Tibial artery (tissue), 4 donors: ENCODE measurements at regions of chr4 and their contacts with region 1.

Region 1: GRCh38 chr4:2462218-2462991 is 6.5 kb upstream of the RNF4 start:
- DNase-seq: peak; percentile 42 to 75
- H3K4me3 ChIP-seq: peak overlapping the region; percentile 53 to 62
- H3K27ac ChIP-seq: peak overlapping the region in 1 of 2 donors; percentile 47
- H3K4me1 ChIP-seq: peaks cover 0 to 19% (median 13%) of the 10 kb centered on the region in 4 donors
- H3K27me3 ChIP-seq: peaks cover 0 to 21% of the 10 kb centered on the region in 2 donors
- CTCF ChIP-seq: peak; percentile 58 to 62

Region 2: GRCh38 chr4:2217726-2218125 is 244.7 kb before region 1 on chr4:
- intact Hi-C with region 1: loop called (anchors 5 kb)
- DNase-seq: no peak
- H3K4me3 ChIP-seq: no peak overlapping the region
- H3K27ac ChIP-seq: no peak overlapping the region
- H3K4me1 ChIP-seq: peaks cover 0 to 4% (median 0%) of the 10 kb centered on the region in 4 donors
- H3K27me3 ChIP-seq: no peaks in the 10 kb centered on the region
- CTCF ChIP-seq: no peak

Region 3: DNA sequence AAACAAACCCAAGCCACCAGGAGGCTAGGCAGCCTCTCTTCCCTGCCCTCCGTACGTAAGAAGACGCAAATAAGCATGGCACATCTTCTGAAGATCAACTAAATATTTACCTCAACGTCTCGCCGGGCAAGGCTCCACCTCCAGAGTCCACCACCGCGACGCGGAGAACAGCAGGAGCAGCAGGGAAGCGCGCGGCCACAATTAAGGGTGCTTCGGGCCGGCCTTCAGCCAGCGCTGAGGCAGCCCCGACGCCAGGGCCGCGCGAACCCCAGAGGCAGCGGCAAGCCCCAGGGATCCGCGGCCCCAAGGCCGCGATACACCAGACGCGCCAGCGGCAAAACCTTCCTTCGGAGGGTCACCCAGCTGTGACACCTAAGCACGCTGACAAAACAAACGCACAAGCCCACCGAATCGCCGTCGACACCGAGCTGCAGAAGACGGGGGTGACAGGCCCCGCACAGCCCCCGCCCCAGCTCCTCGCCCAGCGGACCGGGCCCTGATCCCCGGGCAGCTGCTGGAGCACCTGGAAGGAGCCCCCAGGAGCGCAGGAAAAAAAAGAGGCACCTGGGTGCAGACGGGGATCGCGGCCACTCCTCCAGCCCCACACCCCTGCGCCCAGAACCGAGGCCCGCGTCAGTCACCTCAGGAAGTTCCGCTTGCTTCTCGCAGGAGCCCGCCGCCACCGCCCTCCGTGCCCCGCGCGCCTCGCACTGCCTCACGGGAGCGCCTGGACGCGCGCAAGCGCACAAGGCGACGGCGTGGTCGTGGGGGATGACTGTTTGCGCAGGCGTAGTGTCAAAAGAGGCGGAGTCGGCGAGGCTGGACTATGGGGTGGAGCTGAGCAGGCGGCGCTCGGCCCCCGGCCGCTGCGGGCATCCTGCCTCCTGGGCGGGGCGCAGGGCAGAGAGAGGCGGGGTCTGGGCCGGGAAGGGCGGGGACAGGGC is 220.7 kb before region 1 on chr4 and contains the starts of genes HAUS3 and POLN:
- intact Hi-C with region 1: loop called (anchors 5 kb)
- DNase-seq: peak; percentile 97 to 99
- H3K4me3 ChIP-seq: peak within 1 kb of the TSS; percentile 76 to 94
- H3K27ac ChIP-seq: peak within 1 kb of the TSS; percentile 71 to 82
- H3K4me1 ChIP-seq: peaks cover 0 to 85% (median 35%) of the 10 kb centered on the region in 4 donors
- H3K27me3 ChIP-seq: no peaks in the 10 kb centered on the region
- CTCF ChIP-seq: no peak

Region 4: DNA sequence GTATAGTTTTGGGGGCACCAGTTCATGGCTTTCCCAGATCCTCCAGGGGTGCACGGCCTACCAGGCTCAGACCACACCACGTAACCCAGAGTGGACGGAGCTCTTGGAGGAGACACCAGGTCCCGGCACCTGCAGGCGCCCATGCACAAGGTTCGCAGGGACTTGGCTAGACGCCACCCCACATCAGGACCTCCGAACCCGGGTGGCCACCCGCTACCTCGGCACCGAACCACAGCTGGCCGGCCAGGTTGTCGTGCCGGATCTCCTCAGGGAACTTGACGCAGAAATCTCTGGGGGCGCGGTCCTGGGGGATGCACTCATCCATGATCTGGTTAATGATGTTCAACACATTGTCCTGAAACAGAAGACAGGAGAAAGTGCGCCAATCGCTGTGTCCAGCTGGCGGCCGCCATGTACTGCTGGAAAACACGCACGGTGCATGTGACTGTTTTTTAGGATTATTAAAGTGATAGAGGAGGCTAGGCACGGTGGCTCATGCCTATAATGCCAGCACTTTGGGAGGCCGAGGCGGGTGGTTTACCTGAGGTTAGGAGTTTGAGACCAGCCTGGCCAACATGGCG is 121.1 kb before region 1 on chr4:
- intact Hi-C with region 1: no loop called
- DNase-seq: peak in 1 of 2 donors; percentile 59
- H3K4me3 ChIP-seq: no peak overlapping the region
- H3K27ac ChIP-seq: no peak overlapping the region
- H3K4me1 ChIP-seq: no peaks in the 10 kb centered on the region
- H3K27me3 ChIP-seq: no peaks in the 10 kb centered on the region
- CTCF ChIP-seq: no peak

Region 5: DNA sequence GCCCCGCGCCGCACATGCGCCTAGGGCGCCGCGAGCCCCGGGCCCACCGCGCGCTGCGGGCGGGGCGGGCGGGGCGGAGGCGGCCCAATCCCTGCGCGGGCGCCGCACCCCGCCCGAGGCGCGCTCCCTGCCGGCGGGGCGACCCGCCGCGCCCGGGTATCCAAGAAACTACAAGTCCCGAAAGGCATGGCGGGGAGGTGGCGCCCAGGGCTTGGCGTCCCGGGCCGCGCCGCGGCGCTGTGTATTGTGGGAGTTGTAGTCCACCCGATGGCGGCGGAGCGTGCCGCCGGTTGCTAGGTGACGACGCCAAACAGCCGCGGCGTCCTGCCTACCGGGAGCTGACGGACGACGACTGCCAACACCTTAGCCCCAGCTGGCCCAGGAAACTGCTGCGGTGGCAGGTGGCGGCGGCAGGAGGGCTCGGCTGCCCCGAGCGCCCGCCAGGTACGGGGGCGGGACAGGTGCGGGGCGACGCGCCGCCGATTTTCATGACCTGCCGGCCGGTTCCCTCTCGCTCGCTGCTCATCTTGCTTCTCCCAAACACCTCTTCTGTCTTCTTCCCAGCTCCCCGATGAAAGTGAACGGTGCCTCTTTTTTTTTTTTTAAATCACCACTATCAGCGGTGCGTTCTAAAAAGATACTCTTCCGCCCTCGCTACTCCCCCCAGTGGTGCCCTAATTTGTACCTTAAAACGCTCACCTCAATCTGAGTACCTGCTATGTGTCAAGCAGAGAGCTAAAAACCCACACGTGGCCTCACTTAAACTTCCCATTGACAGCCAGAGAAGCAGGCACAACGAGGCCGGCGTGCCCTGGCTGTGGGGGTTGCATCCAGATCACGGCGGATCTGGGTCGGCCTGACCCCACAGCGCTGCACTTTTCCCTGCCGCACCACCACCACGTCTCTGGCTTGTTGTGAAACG is 43.5 kb before region 1 on chr4 and contains the start of gene CFAP99:
- intact Hi-C with region 1: loop called (anchors 5 kb)
- DNase-seq: peak; percentile 96 to 97
- H3K4me3 ChIP-seq: peak within 1 kb of the TSS; percentile 56 to 67
- H3K27ac ChIP-seq: peak within 1 kb of the TSS in 1 of 2 donors; percentile 34
- H3K4me1 ChIP-seq: peaks cover 0 to 34% (median 30%) of the 10 kb centered on the region in 4 donors
- H3K27me3 ChIP-seq: peaks cover 0 to 43% of the 10 kb centered on the region in 2 donors
- CTCF ChIP-seq: no peak